Left ventricle myocardium superior (tissue), 1 donor: ENCODE measurements at regions of chr2 and their contacts with region 1.

Region 1: DNA sequence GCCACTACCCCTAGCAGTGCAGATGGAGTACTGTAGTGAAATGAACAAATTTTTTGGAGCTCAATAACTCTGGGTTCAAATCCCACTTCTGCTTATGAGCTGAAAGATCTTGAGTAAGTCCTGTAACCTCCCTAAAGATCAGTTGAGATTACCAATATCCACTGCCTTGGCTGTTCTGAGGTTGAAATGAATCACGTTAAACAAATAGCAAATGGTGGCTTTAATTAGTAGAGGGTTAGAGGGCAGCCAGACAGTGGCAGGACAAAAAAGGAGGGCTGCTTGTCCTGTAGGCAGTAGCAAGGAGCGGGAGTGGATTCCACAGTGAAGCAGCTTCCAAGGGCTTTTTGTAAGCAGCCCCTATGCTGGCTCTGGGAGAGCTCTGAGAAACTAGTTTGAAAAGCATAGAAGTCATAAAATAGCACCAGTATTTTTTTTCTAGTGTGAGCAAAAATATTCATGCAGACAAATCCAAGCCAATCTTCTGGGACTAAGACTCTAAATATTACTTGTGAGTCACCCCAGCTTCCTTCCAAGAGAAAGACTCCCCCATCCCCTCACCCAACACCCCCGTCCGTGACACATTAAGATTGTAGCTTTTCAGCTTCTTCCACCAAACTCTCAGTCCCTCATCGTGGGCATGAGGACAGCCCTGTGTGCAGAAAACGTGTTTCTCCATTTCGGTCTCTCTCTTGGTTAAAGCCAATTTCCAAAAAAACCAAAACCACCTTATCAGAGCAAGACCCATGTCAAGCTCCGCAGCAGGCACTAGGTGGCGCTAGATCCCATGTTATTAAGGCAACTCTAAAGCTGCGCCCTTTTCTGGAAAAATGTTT is 123.5 kb upstream of the LGALSL start:
- DNase-seq: peak; percentile 84
- ATAC-seq: peak; percentile 73

Region 2: GRCh38 chr2:63772061-63772460 is 558.4 kb before region 1 on chr2:
- intact Hi-C with region 1: no loop called
- DNase-seq: no peak
- ATAC-seq: no peak

Region 3: DNA sequence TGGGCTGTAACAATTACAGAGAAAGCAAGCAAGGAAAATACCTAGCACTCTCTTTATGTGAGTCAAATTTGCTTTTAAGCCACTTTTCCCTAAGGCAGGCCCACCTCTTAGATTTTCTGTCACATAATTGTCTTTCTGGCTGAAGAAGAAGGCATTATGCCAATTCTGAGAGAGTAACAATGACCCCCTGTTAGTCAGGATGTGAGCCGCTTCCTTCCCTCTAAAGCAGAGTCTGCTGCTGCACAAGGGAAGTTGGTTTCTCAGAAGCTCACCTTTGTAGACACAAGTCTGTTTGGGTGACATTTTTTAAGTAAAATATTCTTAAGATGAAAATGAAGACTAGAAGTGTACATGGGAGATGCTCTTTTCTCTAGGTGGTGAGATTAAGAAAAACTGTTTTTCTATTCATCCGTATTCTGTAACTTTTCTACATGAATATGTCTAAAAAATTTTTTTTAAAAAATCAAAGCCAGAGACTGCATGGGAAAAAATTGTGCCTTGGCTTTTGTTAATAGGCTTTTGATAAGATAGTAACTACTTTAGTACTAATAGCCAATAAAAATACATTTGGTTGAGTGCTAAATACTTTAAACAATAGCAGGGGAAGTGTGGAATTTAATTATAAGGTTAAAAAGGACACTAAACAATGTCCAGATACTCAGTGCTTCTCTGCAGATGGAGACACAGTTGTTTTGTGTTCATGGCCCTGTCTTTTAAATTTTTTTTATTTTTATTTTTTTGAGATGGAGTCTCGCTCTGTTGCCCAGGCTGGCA is 277.8 kb before region 1 on chr2:
- intact Hi-C with region 1: loop called (anchors 5 kb)
- DNase-seq: no peak
- ATAC-seq: peak; percentile 56

Region 4: DNA sequence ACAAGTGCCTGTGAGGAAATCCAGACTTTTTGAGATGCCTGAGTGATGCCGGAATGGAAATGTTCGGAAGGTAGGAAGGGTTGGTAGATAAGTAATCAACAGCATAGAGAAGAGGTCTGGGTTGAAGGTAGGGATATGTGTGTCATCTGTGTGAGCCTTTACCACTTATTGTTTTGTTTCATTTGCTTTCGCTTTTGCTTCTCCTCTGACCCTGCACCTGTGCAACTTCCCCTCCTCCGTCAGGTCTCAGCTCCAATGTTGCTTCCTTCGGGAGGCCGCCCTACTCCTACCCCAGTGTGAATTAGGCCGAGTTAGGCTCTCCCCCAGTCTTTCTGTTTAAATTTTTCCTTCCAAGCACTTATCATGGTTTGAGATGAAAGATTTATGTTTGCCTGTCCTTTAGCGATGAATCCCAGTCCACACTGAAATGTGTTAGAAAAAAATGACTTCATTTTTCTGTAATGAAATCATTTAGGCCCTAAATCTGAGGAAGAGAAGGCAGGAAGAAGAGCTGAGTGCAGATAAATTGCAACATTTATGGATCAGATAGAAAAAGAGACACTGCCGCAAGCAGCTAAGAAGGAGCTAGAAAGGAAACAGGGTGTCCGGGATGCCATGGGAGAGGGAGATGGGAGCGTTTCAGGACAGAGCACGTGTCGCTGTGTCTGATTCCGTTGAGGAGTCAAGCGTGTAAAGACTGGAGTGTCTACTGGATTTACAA is 46.7 kb before region 1 on chr2:
- intact Hi-C with region 1: no loop called
- DNase-seq: no peak
- ATAC-seq: peak; percentile 58

Region 5: GRCh38 chr2:64383881-64384280 is 53.4 kb after region 1 on chr2:
- intact Hi-C with region 1: loop called (anchors 2 kb)
- DNase-seq: no peak
- ATAC-seq: no peak

Region 6: DNA sequence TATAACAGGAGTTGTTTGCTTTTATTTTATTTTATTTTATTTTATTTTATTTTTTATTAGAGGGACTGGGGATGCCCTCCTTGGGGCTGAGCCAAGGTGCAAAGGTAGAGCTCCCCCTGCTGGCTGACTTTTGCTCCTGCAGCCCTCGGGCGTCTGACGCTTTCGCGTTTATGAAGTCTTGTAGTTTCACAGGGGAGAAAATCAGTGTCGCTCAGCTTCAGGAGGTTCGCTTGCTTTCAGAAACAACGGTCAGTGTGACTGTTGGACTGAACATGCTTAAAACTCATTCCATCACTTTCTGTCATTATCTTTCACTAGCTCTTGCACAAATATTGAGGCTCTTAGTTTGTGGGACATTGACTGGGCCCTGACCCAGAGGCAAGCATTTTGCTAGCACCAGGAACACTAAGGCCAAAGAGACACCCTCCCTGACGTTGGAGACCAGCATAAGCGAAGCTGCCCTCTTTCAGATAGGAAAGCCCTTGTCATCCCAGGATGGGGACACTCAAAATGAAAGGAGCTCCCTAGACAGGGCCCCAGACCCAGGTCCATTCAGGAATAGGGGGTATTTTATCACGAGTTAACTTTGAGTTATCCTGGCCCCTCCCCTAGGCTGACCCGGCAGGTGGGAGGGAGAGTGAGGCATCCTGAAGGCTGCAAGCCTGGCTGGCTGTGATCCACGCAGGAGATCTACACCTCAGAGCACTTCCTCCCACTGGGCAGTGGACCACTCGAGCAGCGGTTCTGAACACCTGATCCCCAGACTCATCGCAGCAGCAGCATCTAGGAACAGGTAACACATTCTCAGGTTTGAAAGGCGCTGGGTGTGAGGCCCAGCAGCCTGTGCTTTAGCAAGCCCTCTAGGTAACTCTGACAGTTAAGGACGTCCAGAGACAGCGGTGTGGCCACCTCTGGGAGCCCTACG is 157.8 kb after region 1 on chr2:
- intact Hi-C with region 1: loop called (anchors 2 kb)
- DNase-seq: peak; percentile 75
- ATAC-seq: peak; percentile 72

Region 7: DNA sequence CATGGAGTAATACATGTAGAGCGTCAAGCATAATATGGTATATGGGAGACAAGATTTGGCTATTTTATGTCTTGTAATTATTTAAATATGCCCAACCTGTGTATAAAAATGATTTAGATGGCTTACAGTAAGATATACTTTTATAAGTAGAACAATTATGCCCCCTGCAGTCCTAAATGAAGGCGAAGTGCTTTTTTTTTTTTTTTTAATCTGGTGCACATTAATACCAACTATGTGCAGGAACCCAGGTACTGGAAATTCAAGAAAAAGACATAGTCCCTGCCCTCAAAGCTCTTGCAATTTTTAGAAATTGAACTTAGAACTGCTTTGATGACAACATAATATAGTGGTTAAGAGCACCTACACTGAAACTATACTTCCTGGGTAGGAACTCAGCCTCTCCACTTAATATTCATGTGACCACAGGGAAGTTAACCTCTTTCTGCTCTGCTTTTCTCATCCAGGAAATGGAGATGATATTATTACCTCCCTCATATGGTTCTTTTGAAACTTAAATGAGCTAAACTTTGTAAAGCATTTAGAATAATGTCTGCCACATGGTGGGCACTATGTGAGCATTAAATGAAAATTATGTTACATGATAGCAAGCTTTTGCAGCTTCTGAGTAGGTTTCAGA is 231.8 kb after region 1 on chr2:
- intact Hi-C with region 1: loop called (anchors 2 kb)
- DNase-seq: no peak
- ATAC-seq: peak; percentile 24